Cardiac septum (tissue), 1 donor: ENCODE measurements at regions of chr11 and their contacts with region 1.

Region 1: DNA sequence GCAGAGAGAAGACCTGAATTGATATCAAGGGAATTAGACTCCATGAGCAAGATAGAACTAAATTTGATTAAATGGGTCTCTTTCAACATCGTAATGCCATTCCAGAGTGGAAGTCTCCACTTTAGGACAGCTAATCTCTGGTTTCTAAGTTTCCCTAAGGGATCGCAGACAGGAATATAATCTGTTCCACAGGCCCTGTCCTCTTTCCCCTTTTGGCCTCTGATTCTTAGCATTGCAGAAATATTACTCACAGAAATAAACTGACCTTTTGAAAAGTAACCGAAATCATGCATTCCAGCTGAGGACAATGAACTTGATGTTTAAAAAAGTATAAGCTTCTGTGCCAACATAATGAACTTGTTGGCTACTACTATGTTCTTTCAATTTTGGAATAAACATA is 227.8 kb downstream of the ETS1 start:
- DNase-seq: no peak

Region 2: GRCh38 chr11:128394431-128395089 is 35.0 kb after region 1 on chr11:
- intact Hi-C with region 1: loop called (anchors 5 kb)
- DNase-seq: no peak